ENCODE measurements at regions of chr5 and their contacts with region 1.

Region 1: GRCh38 chr5:57298295-57298984 is 124.6 kb downstream of the GPBP1 start:
- DNase-seq: peak; percentile 94
- H3K4me3 Mint-ChIP-seq: peak overlapping the region; percentile 41
- H3K27ac Mint-ChIP-seq: no peak overlapping the region
- H3K4me1 Mint-ChIP-seq: peaks cover 32% of the 10 kb centered on the region
- H3K27me3 Mint-ChIP-seq: no peaks in the 10 kb centered on the region

Region 2: GRCh38 chr5:56900858-56901578 is 397.4 kb before region 1 on chr5:
- CTCF ChIA-PET with region 1: interaction called, 8 read pairs
- intact Hi-C with region 1: loop called (anchors 2 kb)
- DNase-seq: peak; percentile 46
- H3K4me3 Mint-ChIP-seq: no peak overlapping the region
- H3K27ac Mint-ChIP-seq: no peak overlapping the region
- H3K4me1 Mint-ChIP-seq: peaks cover 2% of the 10 kb centered on the region
- H3K27me3 Mint-ChIP-seq: no peaks in the 10 kb centered on the region

Region 3: GRCh38 chr5:57032151-57032551 is 266.3 kb before region 1 on chr5:
- CTCF ChIA-PET with region 1: no interaction called
- intact Hi-C with region 1: no loop called
- DNase-seq: no peak
- H3K4me3 Mint-ChIP-seq: no peak overlapping the region
- H3K27ac Mint-ChIP-seq: no peak overlapping the region
- H3K4me1 Mint-ChIP-seq: peaks cover 10% of the 10 kb centered on the region
- H3K27me3 Mint-ChIP-seq: peaks cover 2% of the 10 kb centered on the region

Region 4: GRCh38 chr5:57277085-57277484 is 21.4 kb before region 1 on chr5:
- CTCF ChIA-PET with region 1: no interaction called
- intact Hi-C with region 1: no loop called
- DNase-seq: no peak
- H3K4me3 Mint-ChIP-seq: no peak overlapping the region
- H3K27ac Mint-ChIP-seq: no peak overlapping the region
- H3K4me1 Mint-ChIP-seq: no peaks in the 10 kb centered on the region
- H3K27me3 Mint-ChIP-seq: peaks cover 6% of the 10 kb centered on the region

Region 5: GRCh38 chr5:57327561-57328394 is 29.3 kb after region 1 on chr5:
- CTCF ChIA-PET with region 1: interaction called, 6 read pairs
- intact Hi-C with region 1: loop called (anchors 1 kb)
- DNase-seq: peak; percentile 6
- H3K4me3 Mint-ChIP-seq: no peak overlapping the region
- H3K27ac Mint-ChIP-seq: no peak overlapping the region
- H3K4me1 Mint-ChIP-seq: peaks cover 23% of the 10 kb centered on the region
- H3K27me3 Mint-ChIP-seq: no peaks in the 10 kb centered on the region

Region 6: DNA sequence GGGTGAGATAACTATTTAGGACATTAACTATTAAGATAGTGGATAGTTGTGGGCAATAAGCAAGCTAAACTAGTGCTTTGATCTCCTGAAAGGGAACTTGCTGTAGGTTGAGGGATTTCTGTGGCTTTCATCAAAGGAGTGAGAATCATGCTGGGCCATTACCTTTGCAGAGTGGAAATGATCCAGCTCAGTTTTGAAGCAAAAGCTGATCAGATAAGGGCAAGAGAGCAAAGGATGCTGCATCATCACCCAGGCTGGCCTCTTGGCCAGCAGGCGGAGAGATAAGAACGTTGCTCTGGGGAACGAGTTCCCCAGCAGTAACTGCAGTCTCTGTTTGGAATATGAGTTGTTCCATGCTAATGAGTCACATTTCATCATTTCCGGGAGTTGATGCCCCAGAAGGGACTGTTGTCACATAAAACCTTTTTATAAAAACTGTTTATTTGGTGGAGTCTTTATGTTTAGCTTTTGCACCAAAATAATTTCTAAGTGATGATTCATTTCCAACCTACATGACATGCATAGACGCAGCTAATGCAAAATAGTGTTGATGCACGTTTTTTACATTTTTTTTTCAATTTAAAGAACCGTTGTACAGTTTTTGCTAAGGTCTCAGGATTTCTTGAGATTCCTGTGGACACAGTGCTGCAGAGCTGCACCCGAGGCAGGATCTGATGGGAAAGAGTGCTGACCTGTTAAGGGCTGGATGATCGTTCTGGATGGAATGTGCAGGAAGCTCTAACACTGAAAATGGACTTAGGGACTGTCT is 84.8 kb after region 1 on chr5:
- CTCF ChIA-PET with region 1: interaction called, 6 read pairs
- intact Hi-C with region 1: loop called (anchors 1 kb)
- DNase-seq: peak; percentile 55
- H3K4me3 Mint-ChIP-seq: no peak overlapping the region
- H3K27ac Mint-ChIP-seq: peak overlapping the region; percentile 6
- H3K4me1 Mint-ChIP-seq: peaks cover 10% of the 10 kb centered on the region
- H3K27me3 Mint-ChIP-seq: peaks cover 1% of the 10 kb centered on the region

Region 7: DNA sequence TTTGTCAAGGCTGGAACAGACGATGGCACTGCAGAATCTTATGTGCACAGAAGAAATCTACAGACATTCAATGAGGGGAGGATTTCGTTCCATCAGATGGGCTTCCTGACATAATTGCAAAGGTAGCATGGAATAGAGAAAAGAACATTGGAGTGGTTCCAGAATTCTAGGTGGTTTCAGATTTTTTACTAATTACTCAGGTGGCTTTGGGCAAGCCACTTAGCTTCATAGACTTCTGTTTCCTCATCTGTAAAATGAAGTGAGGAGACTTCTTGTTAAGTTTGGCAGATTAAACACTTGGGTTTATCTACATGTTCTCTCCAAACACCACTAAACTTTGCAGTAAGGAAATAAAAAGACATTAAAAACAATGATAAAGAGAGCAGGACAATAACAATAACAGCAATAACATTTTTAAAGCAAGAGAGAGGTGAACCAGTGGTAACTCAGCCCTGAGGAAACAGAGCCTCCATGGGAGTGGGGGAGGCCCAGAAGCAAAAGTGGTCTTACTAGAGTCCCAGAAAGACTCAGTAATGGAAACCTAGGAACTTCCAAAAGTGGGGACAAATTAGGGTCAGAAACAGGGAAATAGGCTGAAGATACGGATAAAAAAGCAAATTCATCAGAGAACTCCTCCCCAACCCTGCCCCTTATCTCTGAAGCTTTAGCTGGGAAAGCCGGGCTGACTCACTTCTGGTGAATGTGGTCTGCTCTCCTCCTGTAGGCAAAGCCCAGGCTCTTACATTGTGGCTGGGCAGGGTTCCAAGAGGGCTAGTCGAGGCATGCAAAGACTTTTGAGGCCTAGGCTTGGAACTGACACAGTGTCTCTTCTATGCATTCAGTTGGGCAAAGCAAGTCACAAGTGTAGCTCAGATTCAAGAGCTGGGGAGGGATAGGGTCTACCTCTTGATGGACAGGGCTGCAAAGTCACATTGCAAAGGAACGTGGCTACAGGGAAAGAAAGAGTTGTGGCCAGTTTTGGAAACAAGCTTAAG is 196.0 kb after region 1 on chr5:
- CTCF ChIA-PET with region 1: interaction called, 7 read pairs
- intact Hi-C with region 1: loop called (anchors 1 kb)
- DNase-seq: peak; percentile 80
- H3K4me3 Mint-ChIP-seq: no peak overlapping the region
- H3K27ac Mint-ChIP-seq: peak overlapping the region; percentile 76
- H3K4me1 Mint-ChIP-seq: peaks cover 26% of the 10 kb centered on the region
- H3K27me3 Mint-ChIP-seq: no peaks in the 10 kb centered on the region

Region 8: DNA sequence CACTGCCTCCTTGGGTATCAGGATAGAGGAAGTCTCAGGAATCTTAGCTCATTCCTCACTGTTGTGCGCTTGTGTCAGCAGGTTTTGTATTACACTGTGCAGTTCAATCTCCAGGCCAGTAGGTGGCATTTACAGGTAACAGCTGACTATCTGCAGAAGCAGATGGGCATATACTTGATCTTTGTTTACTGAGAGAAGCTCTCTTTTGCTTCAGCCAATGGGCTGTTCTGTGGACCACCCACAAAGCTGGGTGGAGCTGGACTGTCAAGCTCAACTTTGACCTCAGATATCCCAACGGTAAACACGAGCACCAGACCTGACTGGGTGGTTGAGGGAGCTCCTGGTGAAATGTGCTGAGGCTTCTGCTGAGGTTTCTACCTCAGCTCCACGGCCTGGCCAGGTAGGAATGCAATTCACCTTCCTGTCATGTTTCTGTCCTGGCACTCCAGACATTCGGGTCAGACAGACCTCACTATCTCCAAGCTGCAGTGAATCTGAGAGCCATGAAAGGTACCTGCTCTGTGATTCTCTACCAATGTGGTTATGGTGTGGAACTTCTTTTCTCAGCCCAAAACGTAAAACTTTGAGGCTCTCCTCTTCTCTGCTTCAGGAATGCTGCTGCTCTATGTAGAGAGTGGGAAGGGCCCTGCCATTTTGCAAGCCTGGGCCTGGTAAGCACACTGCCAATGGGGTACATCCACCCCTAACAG is 352.1 kb after region 1 on chr5:
- CTCF ChIA-PET with region 1: interaction called, 3 read pairs
- intact Hi-C with region 1: loop called (anchors 2 kb)
- DNase-seq: peak; percentile 19
- H3K4me3 Mint-ChIP-seq: no peak overlapping the region
- H3K27ac Mint-ChIP-seq: no peak overlapping the region
- H3K4me1 Mint-ChIP-seq: no peaks in the 10 kb centered on the region
- H3K27me3 Mint-ChIP-seq: peaks cover 9% of the 10 kb centered on the region

Region 9: DNA sequence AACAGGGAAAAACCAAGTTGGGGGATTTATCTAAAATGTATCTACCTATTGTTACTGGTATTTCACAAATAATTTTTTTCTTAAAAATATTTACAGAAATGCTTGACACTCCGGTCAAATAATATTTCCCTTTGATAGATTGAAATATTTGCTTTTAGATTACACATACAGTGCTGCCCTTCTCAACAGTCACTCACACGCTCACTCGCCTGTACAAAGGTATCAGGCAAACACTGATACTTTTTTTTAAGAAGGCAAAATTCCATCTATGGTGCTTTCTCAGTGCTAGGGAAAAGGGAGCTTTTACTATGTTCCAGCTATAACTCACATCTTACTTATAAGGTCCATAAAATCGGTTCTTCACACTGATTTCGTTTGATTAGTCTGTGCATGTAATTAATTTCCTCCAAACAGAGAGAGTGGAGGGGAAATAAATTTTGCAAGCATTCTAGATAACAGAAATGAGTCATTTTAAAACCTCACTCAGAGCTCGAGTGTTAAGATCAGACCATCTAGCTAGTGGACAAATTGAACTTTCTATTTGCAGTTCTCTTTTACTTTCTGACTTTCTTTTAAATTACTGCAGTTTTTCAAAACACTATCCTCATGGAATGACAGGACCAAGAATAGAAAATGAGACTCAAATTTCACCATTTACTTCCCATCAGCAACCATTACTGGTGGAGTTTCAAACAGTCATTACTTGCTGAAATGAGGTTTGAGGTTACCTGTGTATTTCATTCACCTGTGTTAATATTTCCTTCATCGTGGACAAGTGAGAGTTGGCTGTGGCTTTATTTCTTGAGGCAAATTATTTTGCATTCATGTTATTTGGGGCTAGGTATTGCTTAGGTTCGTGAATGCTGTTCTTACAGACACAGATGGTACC is 1557.7 kb after region 1 on chr5:
- CTCF ChIA-PET with region 1: no interaction called
- intact Hi-C with region 1: loop called (anchors 5 kb)
- DNase-seq: no peak
- H3K4me3 Mint-ChIP-seq: no peak overlapping the region
- H3K27ac Mint-ChIP-seq: no peak overlapping the region
- H3K4me1 Mint-ChIP-seq: no peaks in the 10 kb centered on the region
- H3K27me3 Mint-ChIP-seq: peaks cover 3% of the 10 kb centered on the region

Measured in activated naive CD4-positive, alpha-beta T cell treated with anti-CD3 and anti-CD28 coated beads for 36 hours (primary cell).